Tibial artery (tissue), 4 donors: ENCODE measurements at regions of chr1 and their contacts with region 1.

Region 1: DNA sequence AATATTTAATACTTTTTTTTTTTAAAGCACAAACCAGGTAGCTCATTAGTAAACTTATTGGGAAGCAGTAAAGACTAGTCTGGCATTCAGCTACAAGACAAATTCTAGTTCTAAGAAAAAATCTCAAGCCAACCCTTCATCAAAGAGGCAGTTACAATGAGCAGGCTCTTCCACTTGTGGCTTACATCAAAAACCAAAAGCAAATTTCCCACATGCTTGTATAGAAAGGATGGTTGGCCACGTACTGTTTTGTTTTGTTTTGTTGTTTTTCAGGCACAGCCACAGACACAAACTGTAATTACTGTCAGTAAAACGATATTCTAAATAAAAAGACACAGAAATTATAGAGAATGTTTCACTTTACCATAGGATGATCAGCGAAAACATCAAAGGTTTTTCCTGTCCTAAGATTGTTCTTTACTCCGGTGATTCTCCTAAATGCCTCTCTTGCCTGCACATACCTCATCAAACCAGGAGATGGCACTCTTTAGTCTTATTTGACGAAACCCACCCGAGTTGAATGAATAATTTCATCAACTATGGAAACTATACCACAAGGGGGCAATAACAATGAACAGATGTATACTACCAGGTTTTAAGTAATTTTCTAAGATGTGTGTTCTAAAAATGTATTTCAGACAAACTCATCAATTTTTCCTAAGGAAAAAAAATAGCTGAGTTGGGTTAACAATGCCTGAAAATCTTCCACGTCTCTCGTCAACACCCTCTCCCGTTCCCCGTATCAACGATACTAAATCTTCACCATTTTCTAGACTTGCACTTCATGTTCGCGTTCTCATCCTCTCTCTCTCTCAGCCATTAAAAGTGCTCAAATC is 26.9 kb downstream of the RPL5 start:
- DNase-seq: peak in 1 of 2 donors; percentile 69
- H3K4me3 ChIP-seq: peak overlapping the region in 1 of 2 donors; percentile 34
- H3K27ac ChIP-seq: no peak overlapping the region
- H3K4me1 ChIP-seq: peaks cover 0 to 7% (median 0%) of the 10 kb centered on the region in 4 donors
- H3K27me3 ChIP-seq: no peaks in the 10 kb centered on the region
- CTCF ChIP-seq: peak; percentile 85 to 100

Region 2: GRCh38 chr1:92709738-92710137 is 149.0 kb before region 1 on chr1:
- intact Hi-C with region 1: no loop called
- DNase-seq: no peak
- H3K4me3 ChIP-seq: no peak overlapping the region
- H3K27ac ChIP-seq: no peak overlapping the region
- H3K4me1 ChIP-seq: no peaks in the 10 kb centered on the region
- H3K27me3 ChIP-seq: no peaks in the 10 kb centered on the region
- CTCF ChIP-seq: no peak

Region 3: GRCh38 chr1:92960395-92961130 is 101.8 kb after region 1 on chr1:
- intact Hi-C with region 1: loop called (anchors 10 kb)
- DNase-seq: peak; percentile 78 to 84
- H3K4me3 ChIP-seq: peak overlapping the region; percentile 63 to 78
- H3K27ac ChIP-seq: peak overlapping the region; percentile 96 to 99
- H3K4me1 ChIP-seq: peaks cover 0 to 45% (median 13%) of the 10 kb centered on the region in 4 donors
- H3K27me3 ChIP-seq: no peaks in the 10 kb centered on the region
- CTCF ChIP-seq: peak; percentile 65 to 68

Region 4: GRCh38 chr1:92994105-92994712 is 135.4 kb after region 1 on chr1:
- intact Hi-C with region 1: loop called (anchors 2 kb)
- DNase-seq: peak; percentile 71
- H3K4me3 ChIP-seq: no peak overlapping the region
- H3K27ac ChIP-seq: no peak overlapping the region
- H3K4me1 ChIP-seq: no peaks in the 10 kb centered on the region
- H3K27me3 ChIP-seq: no peaks in the 10 kb centered on the region
- CTCF ChIP-seq: peak; percentile 80 to 95